ENCODE measurements at regions of chr10 and their contacts with region 1.

Region 1: DNA sequence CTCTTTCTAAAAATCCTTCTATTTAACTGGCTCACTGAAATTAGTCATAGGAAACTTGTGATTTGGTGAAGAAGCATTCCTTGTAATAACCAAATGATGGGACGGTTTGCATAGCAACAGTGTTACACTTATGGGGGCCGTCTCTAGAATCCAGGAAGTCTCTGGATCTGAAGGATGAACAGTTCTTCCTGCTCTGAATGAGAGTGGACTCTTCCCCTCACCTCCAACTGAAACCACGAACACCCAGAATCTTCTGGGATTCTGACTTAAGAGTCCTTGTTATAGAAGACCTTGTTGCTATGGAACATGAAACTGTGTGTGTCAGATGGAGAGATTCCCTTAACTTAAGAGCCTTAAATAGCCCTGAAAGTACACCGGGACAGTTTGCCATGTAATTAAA is 23.2 kb downstream of the NOLC1 start:
- DNase-seq: no peak
- ATAC-seq: no peak
- H3K4me3 ChIP-seq: no peak overlapping the region
- H3K27ac ChIP-seq: no peak overlapping the region
- H3K4me1 ChIP-seq: no peaks in the 10 kb centered on the region
- H3K27me3 ChIP-seq: peaks cover 0 to 9% (median 0%) of the 10 kb centered on the region in 7 donors
- CTCF ChIP-seq: no peak

Region 2: GRCh38 chr10:102064868-102065560 is 110.4 kb before region 1 on chr10 and contains the start of gene HPS6:
- intact Hi-C with region 1: no loop called
- DNase-seq: peak; percentile 90 to 93
- ATAC-seq: peak; percentile 97 to 98 (median 98)
- H3K4me3 ChIP-seq: peak within 1 kb of the TSS; percentile 49 to 96 (median 85)
- H3K27ac ChIP-seq: peak within 1 kb of the TSS; percentile 25 to 97 (median 93)
- H3K4me1 ChIP-seq: peaks cover 10 to 45% (median 33%) of the 10 kb centered on the region in 9 donors
- H3K27me3 ChIP-seq: no peaks in the 10 kb centered on the region
- CTCF ChIP-seq: peak in 7 of 9 donors; percentile 7 to 47 (median 28)
- total RNA-seq, gene HPS6: 8.2 to 13.6 (median 11.1) TPM

Region 3: DNA sequence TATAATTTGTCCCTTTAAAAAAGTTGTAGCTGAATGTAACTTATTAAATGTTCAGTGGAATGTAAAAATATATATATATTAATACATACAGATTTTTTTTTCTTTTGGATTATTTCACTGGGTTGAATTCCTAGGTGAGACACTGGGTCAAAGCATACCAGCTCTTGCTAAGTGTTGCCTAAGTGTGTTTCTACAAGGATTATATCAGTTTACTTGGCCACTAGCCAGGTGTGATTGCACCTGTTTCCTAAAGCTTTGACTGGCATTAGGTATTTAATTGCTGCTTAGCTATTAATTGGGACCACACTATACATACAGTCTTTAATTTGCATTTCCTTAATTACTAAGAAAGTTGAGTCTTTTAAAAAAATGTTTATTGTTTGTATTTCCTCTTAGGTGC is 45.2 kb after region 1 on chr10:
- intact Hi-C with region 1: loop called in 2 of 10 experiments (anchors 5 kb)
- DNase-seq: no peak
- ATAC-seq: no peak
- H3K4me3 ChIP-seq: no peak overlapping the region
- H3K27ac ChIP-seq: no peak overlapping the region
- H3K4me1 ChIP-seq: peaks cover 0 to 8% (median 5%) of the 10 kb centered on the region in 9 donors
- H3K27me3 ChIP-seq: peaks cover 0 to 4% (median 0%) of the 10 kb centered on the region in 7 donors
- CTCF ChIP-seq: no peak